IMR-90 (cell line): ENCODE measurements at regions of chr3 and their contacts with region 1.

Region 1: DNA sequence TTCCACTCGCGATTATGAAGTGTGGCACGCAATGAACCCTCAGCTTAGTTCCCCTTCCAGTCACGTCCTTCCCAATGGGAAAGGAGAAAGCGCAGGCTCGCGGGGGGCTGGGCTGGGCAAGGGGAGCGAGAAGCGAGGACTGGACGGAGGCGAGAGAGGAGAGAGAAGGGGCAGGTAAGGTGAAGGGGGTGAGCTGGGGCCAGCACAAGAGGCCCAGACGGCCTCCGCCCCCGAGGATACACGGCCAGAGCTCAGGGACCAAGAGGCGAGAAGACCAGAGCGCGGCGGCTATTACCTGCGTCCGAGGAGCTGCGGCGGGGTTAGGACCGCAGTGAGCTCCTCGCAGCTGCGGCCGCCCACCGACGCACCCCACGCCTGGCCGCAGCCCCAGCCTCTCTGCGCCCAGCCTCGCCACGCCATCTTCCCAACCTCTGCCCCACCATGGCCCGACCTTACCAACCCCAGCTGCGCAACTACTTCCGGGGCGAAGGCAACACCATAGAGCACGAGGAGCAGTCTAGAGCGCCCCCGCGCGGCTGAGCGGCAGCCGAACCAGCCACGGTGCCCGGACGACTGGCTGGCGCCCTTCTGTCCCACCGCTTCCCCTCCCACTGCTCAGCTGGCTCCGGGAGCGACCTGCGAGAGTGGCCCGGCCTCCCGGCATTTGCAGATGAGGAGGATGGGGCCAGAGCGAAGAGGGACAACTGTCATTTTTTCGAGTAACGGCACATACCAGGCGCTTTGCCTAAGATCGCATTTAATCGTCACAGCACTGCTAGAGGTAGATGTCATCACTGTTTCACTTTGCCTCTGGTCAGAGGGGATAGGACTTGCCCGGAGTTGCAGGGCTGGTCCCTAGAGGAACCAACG is at the start of gene PARL:
- DNase-seq: peak; percentile 81
- ATAC-seq: peak; percentile 98
- H3K4me3 ChIP-seq: peak within 1 kb of the TSS; percentile 90
- H3K27ac ChIP-seq: peak within 1 kb of the TSS; percentile 81
- H3K4me1 ChIP-seq: peaks cover 4% of the 10 kb centered on the region; the same call in 1 of the 2 replicates
- H3K27me3 ChIP-seq: peaks cover 8% of the 10 kb centered on the region
- CTCF ChIP-seq: peak; percentile 94
- POLR2A ChIP-seq: no peak
- RAD21 ChIP-seq: peak; percentile 76
- total RNA-seq, gene PARL: 35.5 and 44.2 TPM in 2 replicates

Region 2: GRCh38 chr3:183122257-183122932 is 762.3 kb before region 1 on chr3:
- CTCF ChIA-PET with region 1: no interaction called
- POLR2A ChIA-PET with region 1: no interaction called
- dilution Hi-C with region 1: no loop called
- in situ Hi-C with region 1: no loop called
- intact Hi-C with region 1: loop called (anchors 10 kb)
- DNase-seq: peak; percentile 74
- ATAC-seq: peak; percentile 78
- H3K4me3 ChIP-seq: no peak overlapping the region
- H3K27ac ChIP-seq: no peak overlapping the region
- H3K4me1 ChIP-seq: 0 out of 2 replicates have a peak, but pooled peaks cover 2% of the 10 kb centered on the region
- H3K27me3 ChIP-seq: peaks cover 12% of the 10 kb centered on the region
- CTCF ChIP-seq: peak; percentile 93
- POLR2A ChIP-seq: no peak
- RAD21 ChIP-seq: peak; percentile 87

Region 3: DNA sequence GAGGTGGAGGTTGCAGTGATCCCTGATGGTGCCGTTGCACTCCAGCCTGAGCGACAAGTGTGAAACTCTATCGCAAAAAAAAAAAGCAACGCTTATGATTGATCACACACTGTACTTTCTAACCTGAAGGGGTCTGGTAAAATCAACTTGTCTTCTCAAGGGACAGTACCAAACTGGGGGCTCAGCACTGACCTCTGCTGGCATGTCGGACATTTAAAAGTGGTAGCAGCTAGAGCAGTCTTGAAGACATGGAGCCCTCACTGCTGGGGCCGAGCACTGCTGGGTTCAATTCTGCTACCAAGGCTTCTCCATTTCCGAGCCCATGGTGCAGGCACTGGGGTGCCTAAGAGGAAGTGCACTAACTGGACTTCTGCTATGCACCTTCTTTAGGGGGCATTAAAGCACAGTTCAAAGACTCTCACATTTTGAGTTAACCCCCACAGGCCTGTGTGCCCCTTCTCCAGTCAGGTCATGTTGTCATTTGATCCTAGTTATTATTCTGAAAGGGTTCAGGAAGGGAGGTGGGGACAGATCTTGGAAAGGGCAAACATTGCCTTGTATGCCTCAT is 695.7 kb before region 1 on chr3:
- CTCF ChIA-PET with region 1: no interaction called
- POLR2A ChIA-PET with region 1: no interaction called
- dilution Hi-C with region 1: no loop called
- in situ Hi-C with region 1: no loop called
- intact Hi-C with region 1: loop called (anchors 10 kb)
- DNase-seq: no peak
- ATAC-seq: no peak
- H3K4me3 ChIP-seq: no peak overlapping the region
- H3K27ac ChIP-seq: no peak overlapping the region
- H3K4me1 ChIP-seq: peaks cover 10% of the 10 kb centered on the region
- H3K27me3 ChIP-seq: no peaks in the 10 kb centered on the region; the same call in 1 of the 2 replicates
- CTCF ChIP-seq: peak; percentile 35
- POLR2A ChIP-seq: no peak
- RAD21 ChIP-seq: no peak

Region 4: GRCh38 chr3:183468424-183468823 is 416.2 kb before region 1 on chr3:
- CTCF ChIA-PET with region 1: no interaction called
- POLR2A ChIA-PET with region 1: no interaction called
- dilution Hi-C with region 1: no loop called
- in situ Hi-C with region 1: no loop called
- intact Hi-C with region 1: loop called (anchors 1 kb)
- DNase-seq: no peak
- ATAC-seq: no peak
- H3K4me3 ChIP-seq: no peak overlapping the region
- H3K27ac ChIP-seq: no peak overlapping the region
- H3K4me1 ChIP-seq: no peaks in the 10 kb centered on the region
- H3K27me3 ChIP-seq: peaks cover 3% of the 10 kb centered on the region
- CTCF ChIP-seq: no peak
- POLR2A ChIP-seq: no peak
- RAD21 ChIP-seq: no peak

Region 5: DNA sequence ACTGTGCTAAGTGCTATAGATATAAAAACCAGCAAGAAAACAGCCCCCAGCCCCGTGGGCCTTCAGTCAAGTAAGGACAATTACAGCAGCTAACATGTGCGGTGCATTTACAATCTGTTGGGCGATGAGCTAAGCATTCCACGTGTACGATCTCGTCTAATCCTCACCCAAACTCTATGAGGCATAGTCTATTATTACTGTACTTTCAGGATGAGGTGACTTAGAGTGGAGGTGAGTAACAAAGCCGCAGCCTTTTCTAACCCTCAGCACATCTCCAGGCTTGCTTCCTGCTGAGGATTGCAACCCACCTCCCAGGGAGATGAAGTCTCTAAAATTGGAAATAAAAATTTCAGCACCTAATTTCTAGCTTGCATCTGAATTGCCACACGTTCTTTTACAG is 403.1 kb before region 1 on chr3:
- CTCF ChIA-PET with region 1: no interaction called
- POLR2A ChIA-PET with region 1: no interaction called
- dilution Hi-C with region 1: no loop called
- in situ Hi-C with region 1: no loop called
- intact Hi-C with region 1: loop called (anchors 5 kb)
- DNase-seq: peak; percentile 50
- ATAC-seq: no peak
- H3K4me3 ChIP-seq: no peak overlapping the region
- H3K27ac ChIP-seq: no peak overlapping the region
- H3K4me1 ChIP-seq: peaks cover 5% of the 10 kb centered on the region
- H3K27me3 ChIP-seq: peaks cover 3% of the 10 kb centered on the region
- CTCF ChIP-seq: no peak
- POLR2A ChIP-seq: no peak
- RAD21 ChIP-seq: no peak

Region 6: GRCh38 chr3:183825456-183826161 is 59.1 kb before region 1 on chr3 and contains the start of gene MAP6D1:
- CTCF ChIA-PET with region 1: interaction called, 5 read pairs
- POLR2A ChIA-PET with region 1: no interaction called
- dilution Hi-C with region 1: no loop called
- in situ Hi-C with region 1: no loop called
- intact Hi-C with region 1: loop called (anchors 1 kb)
- DNase-seq: peak; percentile 46
- ATAC-seq: peak; percentile 87
- H3K4me3 ChIP-seq: peak within 1 kb of the TSS; percentile 68
- H3K27ac ChIP-seq: no peak within 1 kb of the TSS; the same call in 1 of the 2 replicates
- H3K4me1 ChIP-seq: no peaks in the 10 kb centered on the region
- H3K27me3 ChIP-seq: no peaks in the 10 kb centered on the region
- CTCF ChIP-seq: peak; percentile 47
- POLR2A ChIP-seq: no peak
- RAD21 ChIP-seq: peak; percentile 42; the same call in 1 of the 2 replicates
- total RNA-seq, gene MAP6D1: 1.9 and 2.7 TPM in 2 replicates